Common myeloid progenitor, CD34-positive (primary cell): ENCODE measurements at regions of chr19 and their contacts with region 1.

Region 1: DNA sequence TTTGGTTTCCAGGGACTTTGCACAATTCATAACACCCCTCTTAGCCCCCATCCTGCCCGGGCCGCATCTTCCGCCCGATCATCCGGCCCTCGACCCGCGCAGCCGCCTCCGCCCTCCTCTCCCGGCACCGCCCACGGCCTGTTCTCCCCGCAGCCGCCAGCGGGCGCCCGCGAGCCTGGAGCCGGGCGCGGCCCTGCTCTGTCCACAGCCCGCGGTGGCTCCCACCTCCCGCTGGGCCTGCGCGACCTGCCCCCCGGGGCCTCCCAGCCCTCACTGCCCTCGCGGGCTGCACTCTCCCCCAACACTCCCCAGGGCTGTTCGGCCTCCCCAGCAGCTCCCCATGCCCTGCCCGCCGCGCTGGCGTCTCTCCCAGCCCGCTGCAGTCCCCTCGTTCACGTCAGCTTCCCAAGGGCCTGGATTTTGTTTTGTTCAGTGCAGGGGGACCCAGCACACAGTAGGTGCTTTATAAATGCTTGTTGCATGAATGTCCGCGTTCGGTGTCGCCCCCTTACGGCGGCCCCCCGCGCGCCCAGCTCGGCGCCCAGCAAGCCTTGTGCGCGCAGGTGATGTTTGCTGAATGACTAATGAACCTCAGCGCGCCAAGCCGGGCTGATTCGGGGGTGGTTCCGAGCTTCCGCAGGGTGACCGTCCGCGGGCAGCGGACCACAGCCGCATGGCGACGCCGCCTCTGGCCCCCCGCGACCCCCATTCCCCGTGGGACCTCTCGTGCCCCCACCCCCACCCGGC is 4.6 kb upstream of the APC2 start:
- DNase-seq: peak; percentile 47 to 68 (median 67)
- H3K4me3 ChIP-seq: peak overlapping the region in 6 of 7 experiments; percentile 15 to 75 (median 53)
- H3K27ac ChIP-seq: no peak overlapping the region
- H3K4me1 ChIP-seq: peaks cover 0 to 34% (median 31%) of the 10 kb centered on the region in 4 experiments
- H3K27me3 ChIP-seq: peaks cover 0 to 47% (median 17%) of the 10 kb centered on the region in 5 experiments

Region 2: GRCh38 chr19:1455336-1456120 is 10.2 kb after region 1 on chr19:
- CTCF ChIA-PET with region 1: interaction called, 49 read pairs
- POLR2A ChIA-PET with region 1: no interaction called
- DNase-seq: peak; percentile 74 to 82 (median 79)
- H3K4me3 ChIP-seq: peak overlapping the region in 2 of 7 experiments; percentile 13 to 26
- H3K27ac ChIP-seq: no peak overlapping the region
- H3K4me1 ChIP-seq: peaks cover 0 to 35% (median 24%) of the 10 kb centered on the region in 4 experiments
- H3K27me3 ChIP-seq: peaks cover 0 to 80% (median 37%) of the 10 kb centered on the region in 5 experiments

Region 3: DNA sequence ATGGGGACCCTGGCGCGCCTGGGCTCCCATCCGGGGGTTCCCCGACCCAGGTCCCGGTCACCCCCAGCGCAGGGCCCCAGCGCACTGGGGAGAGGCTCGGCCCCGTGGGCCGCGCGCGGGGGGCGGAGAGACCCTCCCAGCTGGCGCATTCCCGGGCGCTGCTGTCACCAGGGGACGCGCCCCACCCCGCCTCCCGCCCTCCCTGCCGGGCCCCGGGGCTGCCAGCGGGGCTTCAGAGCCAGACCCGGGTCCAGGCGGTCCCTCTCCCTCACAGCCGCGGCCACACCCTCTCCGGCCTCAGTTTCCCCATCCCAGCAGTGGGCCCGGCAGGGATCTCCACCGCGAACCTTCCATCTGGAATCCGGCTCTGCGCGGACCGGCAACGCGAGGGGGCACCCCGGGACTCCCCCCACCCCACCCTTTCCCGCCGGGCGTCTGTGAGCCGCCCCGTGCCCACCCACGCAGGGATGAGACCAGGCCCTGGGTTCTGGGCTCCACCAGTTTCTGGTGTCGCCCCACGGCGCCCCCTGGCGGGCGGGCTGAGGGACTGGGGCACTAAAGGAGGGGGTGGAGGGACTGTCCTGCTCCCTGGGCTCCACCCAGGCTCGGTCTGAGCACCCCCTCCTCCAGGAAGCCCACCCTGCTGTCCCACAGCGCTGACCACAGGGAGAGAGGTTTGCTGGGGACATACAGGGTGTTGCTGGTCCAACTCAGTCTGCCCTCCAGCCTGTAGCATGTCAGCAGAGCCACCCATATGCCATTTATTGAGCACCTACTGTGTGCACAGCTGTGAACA is 68.3 kb after region 1 on chr19:
- CTCF ChIA-PET with region 1: no interaction called
- POLR2A ChIA-PET with region 1: no interaction called
- DNase-seq: peak; percentile 52 to 73 (median 66)
- H3K4me3 ChIP-seq: peak overlapping the region in 3 of 7 experiments; percentile 2 to 19 (median 6)
- H3K27ac ChIP-seq: no peak overlapping the region
- H3K4me1 ChIP-seq: peaks cover 0 to 8% (median 5%) of the 10 kb centered on the region in 4 experiments
- H3K27me3 ChIP-seq: peaks cover 0 to 79% (median 24%) of the 10 kb centered on the region in 5 experiments